Right ventricle myocardium inferior (tissue), 1 donor: ENCODE measurements at regions of chr1 and their contacts with region 1.

Region 1: DNA sequence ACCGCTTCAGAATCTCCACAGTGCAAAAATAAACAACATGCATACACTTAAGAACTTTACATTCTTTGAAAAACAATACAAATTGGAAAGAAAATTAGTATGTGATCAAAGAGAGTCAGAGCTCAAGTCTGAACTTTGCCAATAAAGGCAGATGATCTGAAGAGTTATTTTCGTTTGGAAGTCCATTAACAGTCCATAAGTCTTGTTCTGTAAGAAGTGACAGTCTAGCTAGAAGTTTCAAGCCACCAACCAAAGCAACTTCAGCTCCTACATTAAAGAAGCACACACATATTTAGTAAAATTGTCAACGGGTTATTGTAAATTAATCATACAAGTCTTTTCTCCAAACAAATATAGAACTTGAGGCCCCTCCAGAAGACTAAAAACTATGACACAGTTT is 20.7 kb downstream of the ANGEL2 start:
- DNase-seq: no peak
- ATAC-seq: no peak

Region 2: DNA sequence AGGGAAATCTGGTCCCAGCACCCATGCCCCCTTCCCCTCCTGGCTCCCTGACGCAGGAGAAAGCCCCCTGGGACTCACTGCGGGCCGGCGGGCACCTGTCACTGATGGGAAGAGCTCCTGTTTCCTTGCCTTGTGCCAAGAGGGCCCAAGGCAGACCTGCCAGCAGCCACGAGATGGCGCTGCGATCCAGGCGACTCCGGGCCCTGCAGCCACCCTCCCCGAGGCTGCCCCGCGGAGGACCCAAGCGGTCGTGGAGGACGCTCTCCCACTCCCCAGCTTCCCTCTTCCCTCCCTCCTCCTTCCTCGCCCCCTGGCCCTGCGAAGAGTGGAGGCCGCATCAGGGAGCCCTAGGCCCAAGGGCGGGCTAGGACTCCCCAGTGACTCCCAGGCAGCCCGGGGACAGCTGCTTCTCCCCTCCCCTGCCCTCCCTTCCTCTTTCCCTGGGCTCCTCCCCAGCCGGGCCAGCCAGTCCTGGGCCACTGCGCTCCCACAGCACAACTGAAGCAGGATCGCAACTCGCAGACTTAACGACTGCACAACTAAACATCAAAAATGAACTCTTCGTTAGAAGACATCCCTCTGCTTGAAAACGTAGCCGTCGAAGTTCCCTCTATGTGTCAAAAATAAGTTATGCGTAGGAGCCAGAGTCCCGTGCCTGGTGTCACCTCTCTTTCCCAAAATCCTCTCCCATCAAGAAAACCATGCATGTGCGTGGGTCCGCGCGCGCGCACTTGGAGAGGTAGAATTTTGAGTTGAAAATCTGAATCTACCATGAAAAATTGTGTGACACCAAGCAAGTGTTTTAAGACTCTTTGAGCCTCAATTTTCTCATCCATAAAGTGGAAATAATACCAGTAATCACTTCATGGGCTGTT is 329.4 kb before region 1 on chr1:
- intact Hi-C with region 1: loop called (anchors 2 kb)
- DNase-seq: peak; percentile 93
- ATAC-seq: peak; percentile 98

Region 3: DNA sequence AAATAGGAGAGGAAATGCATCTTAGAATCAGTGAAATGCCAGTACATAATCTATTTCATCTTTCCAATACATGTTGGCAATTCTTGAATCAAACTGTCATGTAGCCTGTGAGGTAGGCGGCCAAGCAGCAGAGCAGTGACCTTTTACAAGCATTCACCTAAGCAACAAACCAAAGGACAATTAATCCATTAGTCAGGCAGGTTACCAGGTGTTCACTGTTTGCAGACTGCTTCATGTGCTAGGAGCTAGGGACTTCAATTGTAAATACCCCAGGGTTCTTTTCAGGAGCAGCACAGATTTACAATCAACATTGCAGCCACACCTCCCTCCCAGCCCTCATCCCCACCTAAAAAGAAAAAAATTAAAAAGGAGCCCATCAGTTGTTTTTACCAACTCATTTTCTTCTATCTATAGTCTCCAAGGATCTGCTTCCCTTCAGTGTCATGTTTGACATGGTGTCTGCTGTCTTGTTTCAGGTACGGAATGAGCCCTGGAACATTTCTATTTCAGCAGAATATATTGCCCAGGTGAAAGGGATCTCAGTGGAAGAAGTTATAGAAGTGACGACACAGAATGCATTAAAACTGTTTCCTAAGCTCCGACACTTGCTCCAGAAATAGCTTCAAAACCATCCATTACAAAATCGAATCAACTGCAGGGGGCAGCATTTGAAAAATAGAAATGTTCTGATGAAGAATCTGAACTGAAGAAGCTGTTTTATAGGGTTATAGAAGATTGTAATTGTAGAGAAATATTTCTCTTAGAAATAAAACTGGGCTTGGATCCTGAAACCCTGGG is 180.2 kb before region 1 on chr1:
- intact Hi-C with region 1: loop called (anchors 1 kb)
- DNase-seq: no peak
- ATAC-seq: no peak

Region 4: GRCh38 chr1:213303286-213303685 is 308.4 kb after region 1 on chr1:
- intact Hi-C with region 1: no loop called
- DNase-seq: no peak
- ATAC-seq: peak; percentile 62